ENCODE measurements at regions of chr10 and their contacts with region 1.

Region 1: DNA sequence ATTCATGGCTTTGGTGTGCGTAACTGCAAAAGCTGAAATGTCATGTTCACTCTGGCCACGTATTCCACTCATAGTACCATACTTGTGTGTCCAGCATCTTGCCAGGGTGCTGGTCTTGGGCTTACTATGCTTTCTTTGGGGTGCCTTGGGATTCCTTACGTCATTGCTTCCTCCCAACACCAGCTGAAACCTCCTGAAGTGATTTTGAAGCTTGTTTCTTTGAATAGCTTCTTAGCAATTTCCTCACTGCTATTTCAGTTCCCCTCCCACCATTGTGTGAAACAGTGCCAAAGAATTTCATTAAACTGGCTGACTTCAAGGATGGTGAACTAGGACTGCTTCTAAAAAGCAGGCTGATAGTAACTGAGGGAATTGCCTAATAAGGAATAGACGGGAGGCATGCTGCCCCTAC is 36.9 kb downstream of the ENTPD1 start:
- DNase-seq: no peak

Region 2: GRCh38 chr10:95544783-95545500 is 247.9 kb before region 1 on chr10:
- intact Hi-C with region 1: no loop called
- DNase-seq: no peak

Region 3: DNA sequence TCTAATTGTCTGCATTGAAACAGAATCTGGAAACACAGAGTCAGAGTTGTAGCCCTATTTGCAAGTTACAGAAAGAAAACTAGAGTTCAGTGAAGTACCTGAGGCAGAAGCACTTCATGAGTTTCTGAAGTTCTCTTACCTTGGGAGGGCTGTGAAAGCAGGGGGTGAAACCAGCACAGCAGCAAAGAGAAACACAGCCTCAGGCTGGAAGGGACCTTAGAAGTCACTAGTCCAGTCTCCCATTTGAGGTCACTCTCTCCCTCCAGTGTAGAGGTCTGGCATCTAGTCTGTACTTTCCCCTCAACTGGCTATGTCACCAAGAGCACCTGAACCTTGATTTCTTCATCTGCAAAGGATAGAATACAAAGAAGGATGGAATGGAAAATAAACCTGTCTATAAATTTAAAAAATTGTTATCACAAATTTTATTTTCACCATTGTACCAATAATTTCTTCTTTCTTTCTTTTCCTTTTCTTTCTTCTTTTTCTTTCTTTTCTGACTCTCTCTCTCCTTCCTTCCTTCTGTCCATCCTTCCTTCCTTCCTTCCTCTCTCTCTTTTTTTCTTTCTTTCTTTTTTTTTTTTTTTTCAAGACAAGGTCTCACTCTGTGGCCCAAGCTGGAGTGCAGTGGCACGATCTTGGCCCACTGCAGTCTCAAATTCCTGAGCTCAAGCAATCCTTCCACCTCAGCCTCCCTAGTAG is 195.2 kb before region 1 on chr10:
- intact Hi-C with region 1: no loop called
- DNase-seq: no peak

Region 4: GRCh38 chr10:95741807-95742467 is 50.9 kb before region 1 on chr10:
- intact Hi-C with region 1: loop called (anchors 5 kb)
- DNase-seq: no peak

Region 5: GRCh38 chr10:95755511-95756004 is 37.3 kb before region 1 on chr10:
- intact Hi-C with region 1: loop called (anchors 5 kb)
- DNase-seq: peak; percentile 87

Region 6: GRCh38 chr10:95814011-95814727 is 21.3 kb after region 1 on chr10:
- intact Hi-C with region 1: loop called (anchors 2 kb)
- DNase-seq: no peak

Region 7: GRCh38 chr10:95920798-95921426 is 128.0 kb after region 1 on chr10:
- intact Hi-C with region 1: no loop called
- DNase-seq: no peak

Region 8: GRCh38 chr10:96743988-96744585 is 951.2 kb after region 1 on chr10:
- intact Hi-C with region 1: no loop called
- DNase-seq: no peak